Aorta (tissue), 5 donors: ENCODE measurements at regions of chr1 and their contacts with region 1.

Region 1: GRCh38 chr1:45011837-45012638 is at the start of gene UROD:
- DNase-seq: peak; percentile 96
- ATAC-seq: peak; percentile 95
- H3K4me3 ChIP-seq: peak within 1 kb of the TSS; percentile 74 to 89
- H3K27ac ChIP-seq: peak within 1 kb of the TSS in 1 of 2 donors; percentile 60
- H3K4me1 ChIP-seq: no peaks in the 10 kb centered on the region
- H3K27me3 ChIP-seq: no peaks in the 10 kb centered on the region
- total RNA-seq, gene UROD: 54.6 to 76.2 TPM

Region 2: GRCh38 chr1:44730741-44731512 is 281.1 kb before region 1 on chr1 and contains the start of gene RNU5D-1:
- intact Hi-C with region 1: loop called in 1 of 2 experiments (anchors 5 kb)
- DNase-seq: peak; percentile 96 to 98
- ATAC-seq: peak; percentile 94
- H3K4me3 ChIP-seq: no peak within 1 kb of the TSS
- H3K27ac ChIP-seq: peak within 1 kb of the TSS; percentile 57 to 86
- H3K4me1 ChIP-seq: no peaks in the 10 kb centered on the region
- H3K27me3 ChIP-seq: no peaks in the 10 kb centered on the region
- total RNA-seq, gene RNU5D-1: not detected

Region 3: DNA sequence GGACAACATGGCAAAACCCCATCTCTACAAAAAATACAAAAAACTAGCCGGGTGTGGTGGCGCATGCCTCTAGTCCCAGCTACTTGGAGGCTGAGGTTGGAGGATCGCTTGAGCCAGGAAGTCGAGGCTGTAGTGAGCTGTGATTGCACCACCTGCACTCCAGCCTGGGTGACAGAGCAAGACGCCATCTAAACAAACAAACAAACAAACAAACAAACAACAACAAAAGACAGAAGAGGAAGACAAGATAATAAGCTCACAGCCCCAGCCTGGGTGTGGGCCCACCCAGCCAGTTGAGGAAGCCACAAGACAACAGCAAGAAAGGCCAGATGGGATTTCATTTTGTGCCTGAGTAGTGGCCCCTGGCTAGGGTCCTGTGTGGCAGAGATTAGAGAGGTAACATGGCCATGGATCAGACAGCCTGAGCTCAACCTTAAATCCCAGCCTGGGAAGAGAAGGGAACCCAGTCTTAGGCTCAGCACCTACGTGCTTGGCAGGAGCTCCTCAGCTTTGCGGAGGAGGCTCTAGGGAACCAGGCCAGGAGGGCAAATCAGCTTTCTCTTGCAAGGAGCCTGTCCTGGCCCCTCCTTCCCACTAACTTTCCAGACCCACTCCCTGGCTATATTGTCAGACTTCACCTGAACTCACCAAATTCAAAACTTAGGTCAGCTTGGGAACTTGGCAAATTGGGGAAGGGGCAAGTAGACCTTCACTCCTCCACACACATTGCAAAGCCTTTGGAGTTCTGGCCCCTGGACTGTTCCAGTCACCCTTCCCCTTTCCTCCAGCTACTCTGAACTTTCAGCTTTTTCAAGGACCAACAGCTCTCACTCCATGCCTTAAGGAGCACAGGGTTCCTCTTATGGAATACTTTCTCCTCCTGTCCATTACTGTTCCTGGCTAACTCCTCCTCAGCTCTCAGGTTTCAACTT is 219.0 kb before region 1 on chr1:
- intact Hi-C with region 1: loop called in 1 of 2 experiments (anchors 5 kb)
- DNase-seq: no peak
- ATAC-seq: no peak
- H3K4me3 ChIP-seq: no peak overlapping the region
- H3K27ac ChIP-seq: no peak overlapping the region
- H3K4me1 ChIP-seq: no peaks in the 10 kb centered on the region
- H3K27me3 ChIP-seq: no peaks in the 10 kb centered on the region

Region 4: DNA sequence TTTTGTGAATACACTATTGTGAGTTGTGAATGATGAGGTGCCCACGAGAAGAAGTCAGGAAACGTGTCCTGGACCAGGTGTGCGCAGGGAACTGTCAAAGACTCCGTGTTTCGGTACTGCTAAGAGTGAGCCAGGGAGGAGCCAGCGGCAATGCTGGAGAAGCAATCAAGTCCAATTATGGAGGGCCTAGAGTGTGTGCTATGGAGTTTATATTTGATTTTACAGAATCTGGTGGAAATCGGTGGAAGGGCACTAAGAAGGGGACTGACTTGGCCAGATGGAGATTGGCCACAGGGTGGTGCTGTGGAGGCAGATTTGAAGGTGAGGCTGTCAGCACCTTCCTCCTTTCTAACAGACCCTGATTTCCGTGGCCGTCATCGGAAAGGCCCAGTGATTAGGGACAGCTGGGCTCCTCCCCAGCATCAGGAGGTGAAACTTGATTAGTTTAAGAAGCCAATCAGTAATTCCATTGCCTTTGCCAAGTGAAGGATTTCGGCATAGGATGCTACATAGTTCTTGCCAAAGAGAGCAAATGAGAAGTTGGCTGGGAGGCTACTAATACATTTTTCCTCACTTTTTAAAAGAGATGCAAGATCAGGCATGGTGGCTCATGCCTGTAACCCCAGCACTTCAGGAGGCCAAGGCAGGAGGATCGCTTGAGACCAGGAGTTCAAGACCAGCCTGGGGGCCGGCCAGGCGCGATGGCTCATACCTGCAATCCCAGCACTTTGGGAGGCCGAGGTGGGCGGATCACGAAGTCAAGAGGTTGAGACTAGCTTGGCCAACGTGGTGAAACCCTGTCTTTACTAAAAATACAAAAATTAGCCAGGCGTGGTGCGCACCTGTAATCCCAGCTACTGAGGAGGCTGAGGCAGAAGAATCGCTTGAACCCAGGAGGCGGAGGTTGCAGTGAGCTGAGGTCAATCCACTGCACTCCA is 176.0 kb before region 1 on chr1:
- intact Hi-C with region 1: loop called in 1 of 2 experiments (anchors 5 kb)
- DNase-seq: peak; percentile 93 to 96
- ATAC-seq: peak; percentile 86
- H3K4me3 ChIP-seq: no peak overlapping the region
- H3K27ac ChIP-seq: no peak overlapping the region
- H3K4me1 ChIP-seq: no peaks in the 10 kb centered on the region
- H3K27me3 ChIP-seq: no peaks in the 10 kb centered on the region

Region 5: GRCh38 chr1:45490626-45491486 is 478.8 kb after region 1 on chr1 and contains the start of gene TESK2:
- intact Hi-C with region 1: loop called (anchors 2 to 10 kb)
- DNase-seq: peak; percentile 97
- ATAC-seq: peak; percentile 99
- H3K4me3 ChIP-seq: peak within 1 kb of the TSS; percentile 37 to 70
- H3K27ac ChIP-seq: no peak within 1 kb of the TSS
- H3K4me1 ChIP-seq: no peaks in the 10 kb centered on the region
- H3K27me3 ChIP-seq: no peaks in the 10 kb centered on the region
- total RNA-seq, gene TESK2: 5.2 to 8.1 TPM